Common myeloid progenitor, CD34-positive (primary cell): ENCODE measurements at regions of chr7 and their contacts with region 1.

Region 1: GRCh38 chr7:23696916-23697441 is 13.0 kb upstream of the STK31 start:
- DNase-seq: peak; percentile 73 to 90 (median 85)
- H3K4me3 ChIP-seq: peak overlapping the region in 1 of 7 experiments; percentile 17
- H3K27ac ChIP-seq: peak overlapping the region in 1 of 2 experiments; percentile 50
- H3K4me1 ChIP-seq: peaks cover 0 to 25% (median 10%) of the 10 kb centered on the region in 4 experiments
- H3K27me3 ChIP-seq: no peaks in the 10 kb centered on the region

Region 2: GRCh38 chr7:23570592-23571200 is 126.3 kb before region 1 on chr7:
- CTCF ChIA-PET with region 1: interaction called, 13 read pairs
- POLR2A ChIA-PET with region 1: no interaction called
- DNase-seq: peak; percentile 58 to 75 (median 61)
- H3K4me3 ChIP-seq: no peak overlapping the region
- H3K27ac ChIP-seq: no peak overlapping the region
- H3K4me1 ChIP-seq: no peaks in the 10 kb centered on the region
- H3K27me3 ChIP-seq: no peaks in the 10 kb centered on the region

Region 3: DNA sequence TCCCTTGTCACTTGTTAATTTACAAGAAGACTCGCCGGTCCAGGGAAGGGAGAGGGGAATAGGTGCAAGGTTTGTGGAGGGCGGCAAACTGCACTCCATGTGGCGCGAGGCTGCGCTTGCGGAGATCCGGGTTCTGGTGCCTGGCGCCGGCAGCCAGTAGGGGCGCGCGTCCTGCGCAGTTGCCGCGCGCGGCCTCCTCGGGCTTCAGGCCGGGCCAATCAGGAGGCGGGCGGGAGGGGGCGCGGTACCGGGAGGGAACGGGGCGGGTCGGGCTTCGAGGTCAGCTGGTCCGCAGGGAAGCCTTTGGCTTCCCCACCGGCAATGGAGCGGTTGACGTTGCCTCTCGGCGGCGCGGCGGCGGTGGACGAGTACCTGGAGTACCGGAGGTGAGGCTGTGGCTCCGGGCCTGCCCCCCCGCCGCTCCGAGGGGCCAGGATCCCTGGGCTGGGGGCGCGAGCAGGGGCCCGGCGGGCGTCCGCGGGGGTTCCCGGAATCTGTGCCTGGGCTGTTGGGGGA is 17.0 kb before region 1 on chr7 and contains the start of gene FAM221A:
- CTCF ChIA-PET with region 1: interaction called, 69 read pairs
- POLR2A ChIA-PET with region 1: interaction called, 5 read pairs
- DNase-seq: peak; percentile 87 to 91 (median 88)
- H3K4me3 ChIP-seq: peak within 1 kb of the TSS; percentile 59 to 92 (median 76)
- H3K27ac ChIP-seq: peak within 1 kb of the TSS in 1 of 2 experiments; percentile 31
- H3K4me1 ChIP-seq: peaks cover 0 to 15% (median 6%) of the 10 kb centered on the region in 4 experiments
- H3K27me3 ChIP-seq: no peaks in the 10 kb centered on the region

Region 4: DNA sequence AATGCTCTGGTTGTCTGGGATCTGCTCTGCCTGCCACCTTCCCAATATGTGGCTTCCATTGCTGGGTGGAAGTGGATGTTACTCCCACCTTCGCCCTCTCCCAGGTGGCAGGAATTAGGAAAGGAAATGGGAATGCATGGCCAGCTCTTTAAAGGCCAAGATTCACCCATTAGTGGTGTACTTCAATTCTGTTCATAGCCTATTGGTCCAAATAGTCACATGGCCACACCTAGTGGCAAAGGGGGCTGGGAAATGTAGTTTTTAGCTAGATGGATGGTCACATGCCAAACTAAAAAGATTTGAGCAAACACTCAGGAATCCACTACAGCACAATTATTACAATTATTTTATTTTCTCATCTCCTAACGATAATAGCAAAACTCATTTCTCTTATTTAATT is 722.1 kb after region 1 on chr7:
- CTCF ChIA-PET with region 1: no interaction called
- POLR2A ChIA-PET with region 1: no interaction called
- DNase-seq: peak in 2 of 3 donors; percentile 26
- H3K4me3 ChIP-seq: no peak overlapping the region
- H3K27ac ChIP-seq: no peak overlapping the region
- H3K4me1 ChIP-seq: no peaks in the 10 kb centered on the region
- H3K27me3 ChIP-seq: no peaks in the 10 kb centered on the region